ENCODE measurements at regions of chr2 and their contacts with region 1.

Region 1: GRCh38 chr2:37262522-37262921 is 31.1 kb downstream of the NDUFAF7 start:
- DNase-seq: no peak
- ATAC-seq: no peak
- H3K4me3 Mint-ChIP-seq: no peak overlapping the region
- H3K27ac Mint-ChIP-seq: no peak overlapping the region
- H3K4me1 Mint-ChIP-seq: peaks cover 1% of the 10 kb centered on the region
- H3K27me3 Mint-ChIP-seq: no peaks in the 10 kb centered on the region

Region 2: GRCh38 chr2:37083873-37084794 is 178.4 kb before region 1 on chr2 and contains the starts of genes GPATCH11 and HEATR5B:
- CTCF ChIA-PET with region 1: no interaction called
- POLR2A ChIA-PET with region 1: no interaction called
- intact Hi-C with region 1: loop called in 1 of 2 experiments (anchors 1 kb)
- DNase-seq: peak; percentile 94
- ATAC-seq: peak; percentile 89
- H3K4me3 Mint-ChIP-seq: no peak within 1 kb of the TSS
- H3K27ac Mint-ChIP-seq: no peak within 1 kb of the TSS
- H3K4me1 Mint-ChIP-seq: peaks cover 44% of the 10 kb centered on the region
- H3K27me3 Mint-ChIP-seq: no peaks in the 10 kb centered on the region
- total RNA-seq, gene GPATCH11: 9.6 to 10.0 TPM
- total RNA-seq, gene HEATR5B: 15.2 TPM

Region 3: GRCh38 chr2:37189452-37190153 is 72.9 kb before region 1 on chr2:
- CTCF ChIA-PET with region 1: no interaction called
- POLR2A ChIA-PET with region 1: no interaction called
- intact Hi-C with region 1: no loop called
- DNase-seq: peak; percentile 22
- ATAC-seq: peak; percentile 88
- H3K4me3 Mint-ChIP-seq: no peak overlapping the region
- H3K27ac Mint-ChIP-seq: no peak overlapping the region
- H3K4me1 Mint-ChIP-seq: peaks cover 2% of the 10 kb centered on the region
- H3K27me3 Mint-ChIP-seq: peaks cover 3% of the 10 kb centered on the region